ENCODE measurements at regions of chrX and their contacts with region 1.

Region 1: DNA sequence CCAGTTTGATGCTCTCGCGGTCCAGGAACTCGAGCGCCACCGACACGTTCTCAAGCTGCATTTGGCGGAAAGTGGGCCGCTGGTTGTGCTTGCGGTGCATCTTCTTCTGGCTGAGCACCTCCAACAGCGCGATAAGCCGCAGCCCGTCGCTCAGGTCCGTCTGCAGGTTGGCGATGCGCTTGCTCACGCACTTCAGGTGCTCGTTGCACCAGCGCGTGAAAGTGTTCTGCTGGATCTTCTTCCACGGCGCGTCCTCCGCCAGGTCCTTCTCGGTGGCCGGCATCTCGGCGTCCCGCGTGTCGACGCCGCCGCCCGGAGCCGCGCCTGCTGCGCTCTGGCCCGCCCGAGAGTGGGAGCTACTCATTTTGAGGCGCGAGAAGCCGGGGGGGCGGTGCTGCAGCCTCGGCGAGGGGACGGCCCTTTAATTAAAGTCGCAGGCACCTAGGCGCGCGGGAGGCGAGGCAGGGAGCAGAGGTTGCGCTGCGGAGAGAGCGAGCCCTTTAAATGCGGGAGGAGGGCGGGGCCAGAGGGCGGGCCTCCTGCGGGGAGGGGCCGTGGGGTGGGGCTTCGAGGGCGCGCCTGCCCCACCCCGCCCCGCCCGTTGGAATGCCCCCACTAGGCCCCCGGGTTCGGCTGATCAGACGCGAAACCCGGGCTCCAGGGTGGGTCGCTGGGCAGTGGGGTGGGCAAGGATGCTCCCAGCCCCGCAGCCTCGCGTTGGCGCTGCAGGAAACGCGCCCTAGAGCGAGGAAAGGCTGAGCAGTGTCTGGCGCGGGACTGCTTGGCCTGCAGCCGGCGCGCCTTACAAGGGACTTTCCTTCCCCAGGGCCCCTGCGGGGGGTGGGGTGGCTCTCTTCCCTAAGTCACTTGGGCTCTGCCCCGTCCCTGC is 3.3 kb downstream of the FLNA start:
- DNase-seq: peak; percentile 95
- H3K4me3 Mint-ChIP-seq: peak overlapping the region; percentile 76
- H3K27ac Mint-ChIP-seq: peak overlapping the region; percentile 56
- H3K4me1 Mint-ChIP-seq: peaks cover 22% of the 10 kb centered on the region
- H3K27me3 Mint-ChIP-seq: no peaks in the 10 kb centered on the region

Region 2: DNA sequence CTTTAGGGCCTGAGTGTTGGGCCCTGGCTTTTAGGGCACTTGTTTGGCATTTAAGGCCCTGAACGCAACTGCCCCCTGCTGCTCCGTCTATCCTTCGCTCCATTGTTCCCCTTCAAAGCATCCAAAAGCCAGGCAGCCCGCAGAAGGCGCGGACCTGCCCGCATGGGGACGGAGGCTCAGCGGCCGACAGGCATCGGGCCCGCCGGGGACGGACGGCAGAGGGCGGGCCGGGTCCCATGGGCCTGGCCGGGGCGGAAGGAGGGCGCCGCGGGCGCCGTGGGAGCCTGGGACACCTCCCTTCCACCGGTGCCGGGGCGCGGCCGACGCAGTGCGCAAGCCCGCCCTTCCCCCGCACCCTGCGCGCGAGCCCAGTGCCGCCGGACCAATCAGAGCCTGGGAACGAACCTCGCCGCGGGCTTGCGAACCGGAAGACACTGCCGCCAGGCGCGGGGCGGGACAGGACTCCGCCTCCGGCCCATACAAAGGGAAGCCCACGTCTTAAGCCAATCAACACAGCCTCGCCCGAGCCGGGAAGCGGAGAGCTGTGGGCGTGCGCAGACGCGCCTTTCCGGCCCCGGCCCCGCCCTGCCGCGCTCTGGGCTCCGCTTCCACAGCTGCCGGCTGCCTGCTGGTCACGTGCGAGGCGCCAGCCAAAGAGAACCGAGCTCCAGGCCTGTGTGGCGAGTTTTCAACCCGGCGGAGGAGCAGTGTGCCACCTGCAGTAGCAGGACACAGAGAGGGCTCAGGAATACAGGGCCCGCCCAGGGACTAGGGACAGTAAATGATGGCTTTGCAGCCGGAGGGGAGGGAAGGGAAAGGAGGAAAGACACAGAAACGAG is 443.0 kb before region 1 on chrX:
- CTCF ChIA-PET with region 1: interaction called, 7 read pairs
- intact Hi-C with region 1: loop called (anchors 1 kb)
- DNase-seq: peak; percentile 93
- H3K4me3 Mint-ChIP-seq: peak overlapping the region; percentile 88
- H3K27ac Mint-ChIP-seq: peak overlapping the region; percentile 98
- H3K4me1 Mint-ChIP-seq: peaks cover 28% of the 10 kb centered on the region
- H3K27me3 Mint-ChIP-seq: no peaks in the 10 kb centered on the region

Region 3: DNA sequence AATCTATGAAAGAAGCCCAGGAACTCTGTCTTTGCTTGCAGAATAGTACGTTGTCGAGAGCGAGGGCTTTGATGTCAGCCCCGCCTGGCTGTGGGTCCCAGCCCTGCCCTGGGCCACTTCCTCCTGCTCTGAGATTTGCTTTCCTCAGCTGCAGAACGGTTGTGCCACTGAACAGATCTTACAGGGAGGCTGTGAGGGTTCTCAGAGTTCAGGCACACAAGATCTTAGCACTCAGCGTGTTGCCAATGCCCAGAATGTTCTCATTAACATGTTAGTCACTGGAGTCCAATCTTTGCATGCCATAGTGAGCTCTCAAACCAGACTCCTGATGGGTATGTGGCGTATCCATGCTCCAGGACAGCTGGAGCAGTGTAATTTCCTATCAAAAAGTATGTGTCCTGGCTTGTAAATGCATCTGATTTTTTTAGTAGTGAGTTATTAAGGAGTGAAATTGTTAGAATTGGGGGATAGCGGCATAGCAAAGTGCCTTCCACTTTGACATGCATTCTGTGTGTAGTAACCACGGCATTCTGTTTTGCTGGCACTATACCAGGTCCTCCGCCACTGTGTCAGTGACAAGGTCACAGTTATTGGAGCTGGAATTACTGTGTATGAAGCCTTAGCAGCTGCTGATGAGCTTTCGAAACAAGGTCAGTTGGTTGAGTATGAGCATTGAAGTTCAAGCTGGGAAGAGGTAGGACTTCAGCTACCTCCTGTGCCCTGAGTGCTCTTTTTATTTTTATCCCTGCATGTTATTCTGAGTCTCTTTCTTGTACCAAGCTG is 43.9 kb before region 1 on chrX:
- CTCF ChIA-PET with region 1: interaction called, 5 read pairs
- intact Hi-C with region 1: loop called (anchors 2 kb)
- DNase-seq: peak; percentile 59
- H3K4me3 Mint-ChIP-seq: peak overlapping the region; percentile 39
- H3K27ac Mint-ChIP-seq: no peak overlapping the region
- H3K4me1 Mint-ChIP-seq: peaks cover 37% of the 10 kb centered on the region
- H3K27me3 Mint-ChIP-seq: no peaks in the 10 kb centered on the region

Region 4: GRCh38 chrX:154436983-154437719 is 66.0 kb after region 1 on chrX and contains the start of gene GDI1:
- CTCF ChIA-PET with region 1: no interaction called
- intact Hi-C with region 1: loop called (anchors 2 kb)
- DNase-seq: peak; percentile 45
- H3K4me3 Mint-ChIP-seq: peak within 1 kb of the TSS; percentile 84
- H3K27ac Mint-ChIP-seq: peak within 1 kb of the TSS; percentile 82
- H3K4me1 Mint-ChIP-seq: peaks cover 22% of the 10 kb centered on the region
- H3K27me3 Mint-ChIP-seq: no peaks in the 10 kb centered on the region
- total RNA-seq, gene GDI1: 93.6 to 96.9 TPM

Region 5: DNA sequence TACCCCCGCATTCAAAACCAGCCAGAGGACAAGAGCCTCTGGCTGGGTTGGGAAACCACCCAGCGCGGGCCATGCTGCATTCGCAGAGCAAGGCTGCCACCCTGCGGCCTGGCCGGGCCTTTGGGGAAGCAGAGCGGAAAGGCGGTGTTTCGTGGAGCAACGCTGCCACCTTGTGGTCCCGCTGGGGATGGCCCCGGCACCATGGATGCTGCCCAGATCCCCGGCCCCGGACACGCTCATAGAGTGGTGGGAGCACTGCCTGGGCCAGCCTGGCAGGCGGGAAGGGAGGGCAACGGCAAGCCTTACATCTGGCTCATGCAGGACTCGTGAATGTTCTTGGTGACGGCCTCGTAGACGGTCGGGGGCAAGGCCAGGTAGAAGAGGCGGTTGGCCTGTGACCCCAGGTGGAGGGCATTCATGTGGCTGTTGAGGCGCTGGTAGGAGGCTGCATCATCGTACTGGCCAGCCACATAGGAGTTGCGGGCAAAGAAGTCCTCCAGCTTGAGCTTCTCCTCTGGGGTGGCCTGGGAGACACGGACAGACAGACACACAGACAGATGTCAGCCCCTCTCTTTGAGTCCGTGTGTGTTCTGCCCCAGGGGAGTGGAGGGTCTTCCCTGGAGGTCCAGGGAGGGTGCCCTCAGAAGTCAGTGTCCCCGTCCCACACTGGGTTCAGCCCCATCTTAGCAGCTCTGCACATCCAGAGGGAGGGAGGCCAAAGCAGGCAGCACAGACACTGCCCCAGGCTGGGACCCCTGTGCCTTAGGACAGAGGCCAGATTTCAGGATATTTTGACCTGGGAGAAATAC is 163.9 kb after region 1 on chrX:
- CTCF ChIA-PET with region 1: interaction called, 11 read pairs
- intact Hi-C with region 1: loop called (anchors 1 kb)
- DNase-seq: peak; percentile 91
- H3K4me3 Mint-ChIP-seq: no peak overlapping the region
- H3K27ac Mint-ChIP-seq: peak overlapping the region; percentile 61
- H3K4me1 Mint-ChIP-seq: peaks cover 8% of the 10 kb centered on the region
- H3K27me3 Mint-ChIP-seq: no peaks in the 10 kb centered on the region

Region 6: DNA sequence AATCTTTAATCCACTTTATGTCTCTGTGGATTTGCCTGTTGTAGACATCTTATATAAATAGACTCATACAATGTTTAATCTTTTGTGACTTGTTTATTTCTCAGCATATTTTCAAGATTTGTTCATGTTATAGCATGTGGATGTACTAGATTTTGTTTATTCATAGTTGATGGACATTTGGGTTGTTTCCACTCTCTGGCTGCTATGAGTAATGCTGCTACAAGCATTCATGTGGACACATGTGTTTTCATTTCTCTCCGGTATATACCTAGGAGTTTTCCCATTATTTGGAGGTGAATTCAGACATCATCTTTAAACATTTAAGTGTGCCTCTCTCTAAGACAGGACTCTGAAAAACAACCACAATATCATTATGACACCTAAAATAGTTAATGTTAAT is 178.6 kb after region 1 on chrX:
- CTCF ChIA-PET with region 1: no interaction called
- intact Hi-C with region 1: no loop called
- DNase-seq: no peak
- H3K4me3 Mint-ChIP-seq: peak overlapping the region; percentile 8
- H3K27ac Mint-ChIP-seq: peak overlapping the region; percentile 8
- H3K4me1 Mint-ChIP-seq: peaks cover 55% of the 10 kb centered on the region
- H3K27me3 Mint-ChIP-seq: no peaks in the 10 kb centered on the region

Measured in activated naive CD4-positive, alpha-beta T cell treated with anti-CD3 and anti-CD28 coated beads for 36 hours (primary cell).